ENCODE measurements at regions of chr12 and their contacts with region 1.

Region 1: GRCh38 chr12:12032851-12033588 is 37.7 kb upstream of the BCL2L14 start:
- DNase-seq: peak; percentile 79
- H3K4me3 Mint-ChIP-seq: peak overlapping the region; percentile 29
- H3K27ac Mint-ChIP-seq: peak overlapping the region; percentile 55
- H3K4me1 Mint-ChIP-seq: peaks cover 21% of the 10 kb centered on the region
- H3K27me3 Mint-ChIP-seq: peaks cover 3% of the 10 kb centered on the region

Region 2: GRCh38 chr12:11545484-11546330 is 487.3 kb before region 1 on chr12:
- CTCF ChIA-PET with region 1: interaction called, 13 read pairs
- DNase-seq: peak; percentile 77
- H3K4me3 Mint-ChIP-seq: peak overlapping the region; percentile 61
- H3K27ac Mint-ChIP-seq: peak overlapping the region; percentile 96
- H3K4me1 Mint-ChIP-seq: peaks cover 61% of the 10 kb centered on the region
- H3K27me3 Mint-ChIP-seq: no peaks in the 10 kb centered on the region

Region 3: GRCh38 chr12:11581179-11581755 is 451.8 kb before region 1 on chr12:
- CTCF ChIA-PET with region 1: interaction called, 209 read pairs
- DNase-seq: peak; percentile 77
- H3K4me3 Mint-ChIP-seq: no peak overlapping the region
- H3K27ac Mint-ChIP-seq: no peak overlapping the region
- H3K4me1 Mint-ChIP-seq: peaks cover 4% of the 10 kb centered on the region
- H3K27me3 Mint-ChIP-seq: peaks cover 25% of the 10 kb centered on the region

Region 4: DNA sequence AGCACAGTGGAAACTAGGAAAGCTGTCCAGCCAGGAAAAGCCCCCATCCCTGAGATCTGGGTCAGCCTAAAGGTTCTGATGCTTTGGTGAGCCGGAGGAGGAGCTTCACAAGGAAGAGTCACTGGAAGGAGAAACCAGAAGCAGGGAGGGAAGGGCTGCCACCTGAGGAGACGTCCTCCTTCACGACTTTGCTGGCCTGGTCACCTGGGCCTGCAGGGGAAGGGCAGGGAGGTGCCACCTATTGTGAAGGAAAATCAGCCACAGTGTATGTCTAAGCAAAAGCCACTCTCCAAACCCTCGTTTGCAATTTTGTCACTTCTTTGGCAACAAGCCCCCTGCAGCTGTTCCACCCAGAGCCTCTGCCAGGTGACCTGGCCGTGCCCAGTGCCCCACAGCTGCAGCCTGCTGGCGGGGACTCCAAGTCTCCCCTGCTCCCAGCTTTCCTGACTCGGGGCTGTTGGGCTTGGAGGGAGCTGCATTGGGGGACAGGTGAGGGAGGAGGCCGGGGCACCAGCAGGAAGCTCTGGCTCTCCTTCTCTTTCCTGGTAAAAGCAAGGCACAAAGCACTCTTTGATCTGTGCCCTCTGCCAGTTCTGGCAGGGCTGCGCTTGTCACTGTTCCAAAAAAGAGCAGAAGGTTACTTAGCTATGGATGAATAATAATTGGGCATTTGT is 83.1 kb before region 1 on chr12:
- CTCF ChIA-PET with region 1: no interaction called
- DNase-seq: no peak
- H3K4me3 Mint-ChIP-seq: no peak overlapping the region
- H3K27ac Mint-ChIP-seq: no peak overlapping the region
- H3K4me1 Mint-ChIP-seq: peaks cover 22% of the 10 kb centered on the region
- H3K27me3 Mint-ChIP-seq: peaks cover 47% of the 10 kb centered on the region

Region 5: GRCh38 chr12:12008931-12009611 is 23.9 kb before region 1 on chr12:
- CTCF ChIA-PET with region 1: interaction called, 61 read pairs
- DNase-seq: peak; percentile 68
- H3K4me3 Mint-ChIP-seq: peak overlapping the region; percentile 68
- H3K27ac Mint-ChIP-seq: peak overlapping the region; percentile 98
- H3K4me1 Mint-ChIP-seq: peaks cover 86% of the 10 kb centered on the region
- H3K27me3 Mint-ChIP-seq: no peaks in the 10 kb centered on the region

Region 6: GRCh38 chr12:12123036-12123604 is 90.1 kb after region 1 on chr12:
- CTCF ChIA-PET with region 1: no interaction called
- DNase-seq: no peak
- H3K4me3 Mint-ChIP-seq: no peak overlapping the region
- H3K27ac Mint-ChIP-seq: no peak overlapping the region
- H3K4me1 Mint-ChIP-seq: no peaks in the 10 kb centered on the region
- H3K27me3 Mint-ChIP-seq: no peaks in the 10 kb centered on the region

Region 7: GRCh38 chr12:12327802-12328201 is 294.8 kb after region 1 on chr12:
- CTCF ChIA-PET with region 1: interaction called, 25 read pairs
- DNase-seq: peak; percentile 22
- H3K4me3 Mint-ChIP-seq: no peak overlapping the region
- H3K27ac Mint-ChIP-seq: no peak overlapping the region
- H3K4me1 Mint-ChIP-seq: peaks cover 8% of the 10 kb centered on the region
- H3K27me3 Mint-ChIP-seq: peaks cover 17% of the 10 kb centered on the region